Natural killer cell (primary cell): ENCODE measurements at regions of chr2 and their contacts with region 1.

Region 1: GRCh38 chr2:143217512-143218115 is 88.4 kb downstream of the ARHGAP15 start:
- DNase-seq: no peak
- ATAC-seq: peak in 1 of 3 donors; percentile 49
- H3K4me3 ChIP-seq: no peak overlapping the region
- H3K4me3 Mint-ChIP-seq: no peak overlapping the region
- H3K27ac ChIP-seq: no peak overlapping the region
- H3K27ac Mint-ChIP-seq: peak overlapping the region; percentile 29 to 78
- H3K4me1 ChIP-seq: no peaks in the 10 kb centered on the region
- H3K4me1 Mint-ChIP-seq: peaks cover 34 to 38% of the 10 kb centered on the region in 2 donors
- H3K27me3 ChIP-seq: no peaks in the 10 kb centered on the region
- H3K27me3 Mint-ChIP-seq: no peaks in the 10 kb centered on the region
- CTCF ChIP-seq: no peak

Region 2: DNA sequence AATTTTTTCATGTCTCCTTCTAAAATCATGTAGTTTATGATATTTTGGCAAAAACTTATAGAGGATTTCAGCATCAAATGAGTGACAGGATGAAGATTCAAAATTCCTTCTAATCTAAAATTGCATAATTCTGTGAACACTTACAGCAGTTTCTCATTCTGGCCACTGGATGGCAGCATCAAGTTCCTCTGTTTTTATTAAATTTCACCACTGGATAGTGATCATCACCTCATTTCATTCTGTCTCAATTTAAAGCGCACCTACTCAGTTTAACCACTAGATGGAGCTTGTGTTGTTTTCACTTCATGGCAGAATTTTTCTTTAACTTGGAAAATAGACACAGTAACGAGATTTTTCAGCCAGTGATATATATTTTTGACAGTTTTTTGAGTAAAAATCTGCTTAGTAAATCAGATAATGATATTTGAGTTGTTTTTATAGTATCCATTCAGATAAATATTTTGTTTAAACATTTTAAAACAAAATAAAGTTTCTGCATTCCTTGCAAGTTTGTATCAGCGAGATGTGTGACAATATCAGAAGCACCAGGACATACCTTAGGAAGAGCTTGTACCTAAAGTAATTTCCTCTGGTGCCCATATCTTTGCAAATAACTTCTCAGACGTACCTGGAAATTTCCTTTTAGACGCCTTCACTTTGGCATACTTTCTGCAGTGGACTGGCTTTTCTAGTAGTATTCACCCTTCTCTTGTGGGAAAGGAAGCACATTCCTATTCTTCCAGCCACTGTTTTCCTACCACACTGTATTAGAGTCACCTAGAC is 183.1 kb before region 1 on chr2:
- intact Hi-C with region 1: loop called (anchors 1 kb)
- DNase-seq: peak; percentile 26 to 89
- ATAC-seq: peak; percentile 99 to 100 (median 100)
- H3K4me3 ChIP-seq: no peak overlapping the region
- H3K4me3 Mint-ChIP-seq: no peak overlapping the region
- H3K27ac ChIP-seq: no peak overlapping the region
- H3K27ac Mint-ChIP-seq: no peak overlapping the region
- H3K4me1 ChIP-seq: no peaks in the 10 kb centered on the region
- H3K4me1 Mint-ChIP-seq: no peaks in the 10 kb centered on the region
- H3K27me3 ChIP-seq: no peaks in the 10 kb centered on the region
- H3K27me3 Mint-ChIP-seq: no peaks in the 10 kb centered on the region
- CTCF ChIP-seq: peak; percentile 100

Region 3: DNA sequence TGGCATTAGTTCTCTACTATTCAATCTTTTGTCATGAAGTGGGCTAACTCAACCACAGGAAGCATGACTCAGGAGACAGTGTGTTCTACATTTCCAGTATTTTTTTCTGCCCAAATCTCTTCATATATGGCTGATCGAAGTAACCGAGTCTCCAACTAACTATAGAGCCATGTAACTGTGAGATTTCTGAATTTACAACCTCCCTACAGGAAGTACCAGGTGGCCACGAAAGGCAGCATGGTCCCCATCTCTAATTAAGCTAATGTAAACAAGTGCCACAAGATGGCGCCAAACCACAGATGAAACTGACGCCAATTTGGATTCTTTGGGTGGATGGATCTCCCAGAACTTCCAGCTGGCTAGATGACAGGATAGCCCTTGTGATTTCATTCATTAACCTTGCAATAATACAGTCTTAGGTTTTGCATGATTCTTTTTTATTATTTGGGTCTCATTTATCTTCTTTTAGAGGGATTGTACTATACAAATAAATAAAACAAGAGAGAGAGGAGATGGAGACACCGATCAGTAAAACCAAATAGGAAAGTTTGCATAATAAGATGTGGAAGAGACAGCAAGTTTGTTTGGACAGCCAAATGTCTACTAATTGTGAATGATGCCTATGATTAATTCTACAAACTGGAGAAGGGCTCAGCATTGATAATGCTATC is 106.7 kb before region 1 on chr2:
- intact Hi-C with region 1: loop called (anchors 1 kb)
- DNase-seq: peak; percentile 36 to 91
- ATAC-seq: peak; percentile 85 to 87 (median 86)
- H3K4me3 ChIP-seq: no peak overlapping the region
- H3K4me3 Mint-ChIP-seq: no peak overlapping the region
- H3K27ac ChIP-seq: no peak overlapping the region
- H3K27ac Mint-ChIP-seq: peak overlapping the region; percentile 12 to 84
- H3K4me1 ChIP-seq: no peaks in the 10 kb centered on the region
- H3K4me1 Mint-ChIP-seq: peaks cover 6 to 7% of the 10 kb centered on the region in 2 donors
- H3K27me3 ChIP-seq: no peaks in the 10 kb centered on the region
- H3K27me3 Mint-ChIP-seq: peaks cover 2 to 7% of the 10 kb centered on the region in 2 donors
- CTCF ChIP-seq: peak; percentile 90

Region 4: DNA sequence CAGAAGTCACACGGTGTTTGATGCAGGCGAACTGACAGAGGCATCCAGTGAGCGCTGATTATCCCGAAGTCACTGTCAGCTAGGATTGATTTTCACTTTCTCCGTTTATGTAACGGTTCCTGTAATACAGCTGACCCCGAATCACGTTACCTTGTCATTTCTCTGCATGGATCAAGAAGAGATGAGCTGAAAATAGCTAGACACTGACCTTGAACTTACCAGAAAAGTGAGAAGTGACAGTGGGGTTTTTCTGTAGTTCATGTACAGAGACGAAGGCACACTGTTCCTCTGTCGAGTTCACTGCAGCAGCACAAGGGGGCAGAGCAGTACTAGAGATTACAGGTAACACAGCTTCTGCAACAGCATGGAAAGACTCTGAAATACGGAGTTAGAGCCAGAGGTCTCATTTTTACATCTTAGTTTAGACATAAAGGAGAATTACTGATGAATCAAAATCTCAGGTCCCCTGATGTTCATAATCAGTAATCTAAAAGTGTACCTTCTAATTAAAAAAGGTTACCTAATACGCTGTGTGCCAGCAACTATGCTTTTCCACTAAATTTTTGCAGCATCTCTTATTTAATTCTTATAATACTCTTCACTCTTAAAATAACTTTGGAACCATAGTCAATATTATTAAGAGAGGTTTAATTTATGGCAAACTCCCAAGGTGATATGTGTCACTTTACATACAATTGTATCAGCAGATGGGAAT is 55.3 kb before region 1 on chr2:
- intact Hi-C with region 1: loop called (anchors 1 kb)
- DNase-seq: peak in 1 of 2 donors; percentile 85
- ATAC-seq: peak; percentile 84 to 95 (median 92)
- H3K4me3 ChIP-seq: no peak overlapping the region
- H3K4me3 Mint-ChIP-seq: no peak overlapping the region
- H3K27ac ChIP-seq: no peak overlapping the region
- H3K27ac Mint-ChIP-seq: peak overlapping the region; percentile 37 to 78
- H3K4me1 ChIP-seq: peaks cover 4% of the 10 kb centered on the region
- H3K4me1 Mint-ChIP-seq: peaks cover 80 to 82% of the 10 kb centered on the region in 2 donors
- H3K27me3 ChIP-seq: no peaks in the 10 kb centered on the region
- H3K27me3 Mint-ChIP-seq: no peaks in the 10 kb centered on the region
- CTCF ChIP-seq: peak; percentile 40